ENCODE measurements at regions of chr4 and their contacts with region 1.

Region 1: DNA sequence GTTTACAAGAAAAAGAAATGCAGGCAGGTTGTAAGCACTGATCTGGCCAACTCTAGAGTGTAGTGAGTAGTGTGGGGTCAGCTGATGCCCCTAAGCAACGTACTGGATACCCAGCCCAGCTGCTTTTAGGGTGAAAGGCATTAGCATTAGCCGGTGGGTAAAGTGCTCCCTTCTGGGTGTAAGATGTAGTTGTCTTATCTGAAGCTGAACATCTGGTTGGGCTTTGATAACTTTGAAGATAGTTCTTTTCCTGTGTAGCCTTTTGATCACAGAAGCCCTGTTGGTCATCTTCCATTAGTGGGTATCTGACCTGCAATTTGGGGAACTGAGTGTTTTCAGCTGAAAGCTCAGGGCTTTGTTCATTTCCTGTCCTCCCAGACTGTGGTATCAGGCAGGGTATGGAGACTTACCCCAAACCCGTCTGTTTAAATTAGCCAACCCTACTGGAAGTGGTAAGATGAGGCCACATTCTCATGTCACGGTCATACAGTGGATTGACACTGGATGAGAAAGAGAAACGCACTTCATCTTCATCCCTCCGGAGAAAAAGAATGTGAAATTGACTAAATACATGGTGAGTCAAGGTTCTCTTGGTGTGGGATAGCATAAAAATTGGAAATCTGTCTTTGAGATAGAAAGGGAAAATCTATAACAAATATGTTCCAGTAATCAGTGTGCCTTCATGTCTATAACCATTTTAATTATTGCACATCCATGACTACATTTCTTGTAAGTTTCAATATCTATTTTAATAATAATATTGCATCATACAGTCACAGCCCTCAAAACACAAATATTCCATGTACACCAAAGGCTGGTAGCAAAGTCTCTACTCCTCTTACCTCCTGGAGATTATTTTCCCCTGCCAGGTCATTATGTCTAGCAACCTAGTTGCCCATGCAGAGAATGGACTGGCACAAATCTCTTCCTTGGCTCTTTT is 8.7 kb downstream of the RHOH start:
- DNase-seq: peak; percentile 55
- ATAC-seq: peak; percentile 59
- H3K4me3 Mint-ChIP-seq: peak overlapping the region; percentile 98
- H3K27ac Mint-ChIP-seq: peak overlapping the region; percentile 100
- H3K4me1 Mint-ChIP-seq: peaks cover 62% of the 10 kb centered on the region
- H3K27me3 Mint-ChIP-seq: no peaks in the 10 kb centered on the region

Region 2: DNA sequence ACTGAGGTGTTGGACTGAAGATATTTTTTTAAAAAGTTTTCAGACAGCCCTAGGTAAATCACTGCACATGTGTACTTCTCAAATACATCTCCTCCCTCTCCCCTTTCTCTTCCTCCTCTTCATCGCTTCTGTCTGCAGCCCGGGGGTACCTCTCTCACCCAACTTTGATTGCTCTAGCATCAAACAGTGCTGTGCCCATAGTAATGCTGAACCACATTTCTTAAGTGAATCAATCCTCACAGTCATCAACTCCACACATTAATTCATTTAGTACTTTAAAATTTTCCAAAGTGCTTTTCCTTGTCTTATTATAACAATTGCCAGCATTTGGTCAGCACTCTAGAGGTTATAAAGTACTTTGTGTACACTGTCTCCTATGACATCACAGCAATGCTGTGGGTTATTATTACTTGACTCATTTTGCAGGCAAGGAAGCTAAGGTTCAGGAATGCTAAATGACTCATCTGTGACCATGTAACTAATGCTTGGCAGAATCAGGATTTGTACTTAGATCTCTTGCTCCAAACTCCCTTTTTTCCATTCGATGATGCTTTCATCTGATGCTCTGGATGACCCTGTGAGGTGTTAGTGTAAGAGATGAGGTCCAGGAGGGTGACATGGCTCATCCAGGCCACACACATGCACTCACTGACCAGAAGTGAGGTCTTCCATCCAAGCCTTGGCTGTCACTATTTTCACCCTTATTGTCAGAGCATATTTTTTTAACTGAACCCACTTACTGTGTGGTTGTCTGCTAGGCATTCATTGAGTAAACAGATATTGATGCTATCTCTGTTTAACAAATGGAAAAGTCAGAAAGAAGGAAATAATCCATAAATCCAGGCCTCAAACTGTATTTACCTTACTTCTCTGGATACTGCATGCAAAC is 50.1 kb after region 1 on chr4:
- CTCF ChIA-PET with region 1: interaction called, 3 read pairs
- POLR2A ChIA-PET with region 1: interaction called, 4 read pairs
- intact Hi-C with region 1: loop called (anchors 2 kb)
- DNase-seq: no peak
- ATAC-seq: peak; percentile 31
- H3K4me3 Mint-ChIP-seq: no peak overlapping the region
- H3K27ac Mint-ChIP-seq: peak overlapping the region; percentile 44
- H3K4me1 Mint-ChIP-seq: peaks cover 76% of the 10 kb centered on the region
- H3K27me3 Mint-ChIP-seq: no peaks in the 10 kb centered on the region

Measured in activated CD4-positive, alpha-beta T cell treated with anti-CD3 and anti-CD28 coated beads for 36 hours (primary cell).